Right ventricle myocardium superior (tissue), 1 donor: ENCODE measurements at regions of chr10 and their contacts with region 1.

Region 1: GRCh38 chr10:10233229-10233628 is 784.4 kb upstream of the CELF2 start:
- DNase-seq: no peak
- ATAC-seq: no peak

Region 2: GRCh38 chr10:10677479-10677878 is 444.2 kb after region 1 on chr10:
- intact Hi-C with region 1: loop called (anchors 10 kb)
- DNase-seq: peak; percentile 67
- ATAC-seq: peak; percentile 91